ENCODE measurements at regions of chr5 and their contacts with region 1.

Region 1: GRCh38 chr5:160439205-160439600 is 17.5 kb downstream of the PTTG1 start:
- DNase-seq: peak; percentile 91
- ATAC-seq: peak; percentile 84
- H3K4me3 ChIP-seq: peak overlapping the region; percentile 70
- H3K27ac ChIP-seq: no peak overlapping the region
- H3K4me1 ChIP-seq: peaks cover 6% of the 10 kb centered on the region; the same call in 1 of the 2 replicates
- H3K27me3 ChIP-seq: no peaks in the 10 kb centered on the region
- CTCF ChIP-seq: peak; percentile 89

Region 2: GRCh38 chr5:160460377-160461049 is 21.3 kb after region 1 on chr5:
- CTCF ChIA-PET with region 1: interaction called, 8 read pairs
- POLR2A ChIA-PET with region 1: no interaction called
- intact Hi-C with region 1: loop called (anchors 1 kb)
- DNase-seq: no peak
- ATAC-seq: no peak
- H3K4me3 ChIP-seq: no peak overlapping the region
- H3K27ac ChIP-seq: no peak overlapping the region
- H3K4me1 ChIP-seq: peaks cover 22% of the 10 kb centered on the region
- H3K27me3 ChIP-seq: 0 out of 2 replicates have a peak, but pooled peaks cover 3% of the 10 kb centered on the region
- CTCF ChIP-seq: peak; percentile 35; the same call in 1 of the 2 replicates

Region 3: DNA sequence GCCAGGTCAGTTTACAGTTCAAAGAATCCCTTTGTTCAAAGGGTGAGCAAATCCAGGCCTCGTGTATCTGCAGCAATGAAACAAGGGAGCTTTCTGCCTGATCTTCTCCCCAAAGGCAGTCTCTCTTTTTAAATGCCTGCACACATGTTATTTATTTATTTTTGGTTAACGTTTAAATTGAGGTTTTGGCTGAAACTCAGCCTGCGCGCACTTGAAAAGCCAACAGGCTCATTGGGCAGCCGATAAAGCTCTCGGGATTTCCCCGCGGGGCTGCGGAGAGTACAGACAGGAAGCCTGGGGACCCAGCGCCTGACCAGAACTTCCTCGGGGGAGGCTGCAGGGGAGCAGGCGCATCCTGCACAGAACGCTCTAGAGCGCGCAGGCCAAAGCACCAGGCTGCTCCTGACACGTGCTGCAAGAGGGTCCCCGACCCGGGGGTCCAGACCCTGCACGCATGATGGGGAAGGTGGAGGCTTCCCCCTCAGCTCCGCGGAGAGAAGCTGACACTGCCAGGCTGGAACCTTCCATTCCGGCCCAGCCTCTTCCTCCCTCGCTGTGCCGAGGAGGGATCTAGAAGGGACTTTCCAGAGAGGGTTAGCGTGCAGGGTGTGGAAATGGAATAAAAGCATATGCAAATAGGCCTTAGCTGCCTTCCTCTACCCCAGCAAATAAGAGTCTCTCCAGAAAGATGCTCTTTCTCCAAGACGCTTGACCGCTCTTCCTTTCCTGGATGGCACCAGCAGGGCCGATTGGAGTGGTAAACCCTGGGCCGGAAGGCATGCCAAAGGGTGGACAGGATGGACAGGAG is 28.6 kb after region 1 on chr5:
- CTCF ChIA-PET with region 1: interaction called, 9 read pairs
- POLR2A ChIA-PET with region 1: no interaction called
- intact Hi-C with region 1: loop called (anchors 1 kb)
- DNase-seq: peak; percentile 81
- ATAC-seq: peak; percentile 77
- H3K4me3 ChIP-seq: peak overlapping the region; percentile 55
- H3K27ac ChIP-seq: peak overlapping the region; percentile 82
- H3K4me1 ChIP-seq: peaks cover 68% of the 10 kb centered on the region
- H3K27me3 ChIP-seq: no peaks in the 10 kb centered on the region
- CTCF ChIP-seq: no peak

Region 4: GRCh38 chr5:160486573-160486972 is 47.4 kb after region 1 on chr5:
- CTCF ChIA-PET with region 1: no interaction called
- POLR2A ChIA-PET with region 1: no interaction called
- intact Hi-C with region 1: no loop called
- DNase-seq: no peak
- ATAC-seq: no peak
- H3K4me3 ChIP-seq: no peak overlapping the region
- H3K27ac ChIP-seq: no peak overlapping the region
- H3K4me1 ChIP-seq: no peaks in the 10 kb centered on the region
- H3K27me3 ChIP-seq: no peaks in the 10 kb centered on the region
- CTCF ChIP-seq: no peak

Region 5: DNA sequence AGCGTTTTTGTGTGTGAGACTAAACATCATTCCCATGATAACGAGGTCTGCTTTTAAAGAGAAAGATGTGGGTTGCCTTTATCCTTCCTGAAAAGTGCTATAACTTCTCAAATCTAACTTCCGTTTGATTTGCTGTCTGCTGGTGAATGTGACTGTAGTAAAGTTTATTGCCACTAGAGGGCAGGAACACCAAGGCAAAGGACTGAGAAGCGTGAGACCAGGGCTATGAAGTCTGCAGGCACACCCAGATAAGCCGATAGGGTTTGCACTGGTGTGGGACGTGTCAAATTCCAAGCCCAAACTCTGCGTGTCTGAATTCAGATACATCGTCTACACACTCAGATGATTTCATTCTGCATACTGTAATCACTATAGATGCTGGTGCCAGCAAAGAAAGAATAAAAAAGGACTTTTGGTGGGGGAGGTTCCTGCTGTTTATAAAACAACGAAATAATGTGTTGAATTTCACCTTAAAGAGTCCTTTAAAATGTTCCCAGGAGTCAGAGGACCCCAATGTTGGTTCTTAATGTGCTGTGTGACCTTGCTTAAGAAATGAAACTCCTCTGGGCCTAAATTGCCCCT is 69.7 kb after region 1 on chr5:
- CTCF ChIA-PET with region 1: interaction called, 4 read pairs
- POLR2A ChIA-PET with region 1: no interaction called
- intact Hi-C with region 1: loop called (anchors 1 kb)
- DNase-seq: peak; percentile 91
- ATAC-seq: peak; percentile 93
- H3K4me3 ChIP-seq: no peak overlapping the region
- H3K27ac ChIP-seq: no peak overlapping the region
- H3K4me1 ChIP-seq: no peaks in the 10 kb centered on the region
- H3K27me3 ChIP-seq: peaks cover 25% of the 10 kb centered on the region; the same call in 1 of the 2 replicates
- CTCF ChIP-seq: peak; percentile 94

Region 6: DNA sequence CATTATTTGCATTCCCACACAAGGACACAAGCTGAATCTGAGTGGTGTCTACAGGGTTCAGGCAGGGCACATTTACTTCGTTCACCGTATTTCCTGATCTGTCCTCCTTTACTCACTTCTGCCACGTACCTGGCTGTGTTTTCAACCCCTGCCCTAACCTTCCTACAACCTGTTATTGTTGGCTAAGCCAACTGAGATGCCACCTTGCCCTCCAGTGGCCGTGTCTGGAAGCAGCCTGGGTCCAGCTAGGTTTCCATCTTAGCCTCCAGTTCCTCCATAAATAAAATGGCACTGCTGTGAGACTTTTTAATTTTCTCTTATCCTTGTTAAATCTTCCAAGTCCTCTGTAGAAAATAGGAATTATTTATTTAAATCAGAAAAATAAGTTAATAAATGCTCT is 348.0 kb after region 1 on chr5:
- CTCF ChIA-PET with region 1: no interaction called
- POLR2A ChIA-PET with region 1: no interaction called
- intact Hi-C with region 1: loop called (anchors 10 kb)
- DNase-seq: peak; percentile 20
- ATAC-seq: no peak
- H3K4me3 ChIP-seq: no peak overlapping the region
- H3K27ac ChIP-seq: no peak overlapping the region
- H3K4me1 ChIP-seq: no peaks in the 10 kb centered on the region
- H3K27me3 ChIP-seq: no peaks in the 10 kb centered on the region
- CTCF ChIP-seq: peak; percentile 48